BJ (cell line): ENCODE measurements at regions of chr11 and their contacts with region 1.

Region 1: DNA sequence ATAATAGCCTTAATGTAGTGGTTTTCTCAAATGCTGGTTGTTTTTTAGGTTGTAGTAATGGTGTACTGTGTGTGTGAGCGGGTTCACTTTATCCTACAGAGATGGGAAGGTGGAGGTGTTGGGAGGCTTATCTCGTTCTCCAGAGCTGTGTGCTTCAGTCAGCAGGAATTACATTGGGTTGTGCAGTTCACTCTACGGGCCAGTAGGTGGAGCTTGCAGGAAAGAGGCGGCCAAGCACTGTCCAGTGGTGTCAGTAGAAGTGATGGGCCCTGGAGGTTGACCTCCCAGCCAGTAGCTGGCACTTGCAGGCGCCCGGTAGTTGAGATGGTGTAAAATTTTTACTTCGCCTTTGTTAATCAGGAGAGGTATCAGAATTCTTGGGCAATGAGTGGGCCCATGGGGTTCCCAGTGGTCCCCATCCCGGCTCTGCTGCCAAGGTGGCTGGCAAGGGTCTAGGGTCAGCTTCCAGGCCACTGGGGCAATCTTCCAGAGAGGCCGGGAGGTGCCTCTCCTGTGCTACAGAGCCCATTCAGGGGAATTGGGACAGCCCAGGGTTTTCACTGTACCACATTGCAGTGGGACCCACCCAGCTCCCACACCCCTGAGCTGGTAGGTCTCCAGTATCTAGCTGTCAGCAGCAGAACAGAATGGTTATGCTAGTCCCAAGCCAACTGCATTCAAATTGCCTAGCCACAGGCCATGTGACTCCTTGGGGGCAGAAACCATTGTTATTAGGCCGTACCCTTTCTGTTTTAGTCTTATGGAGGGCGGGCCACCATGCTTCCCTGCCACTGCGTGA is 43.9 kb downstream of the BIRC2 start:
- DNase-seq: no peak
- H3K4me3 ChIP-seq: no peak overlapping the region
- H3K27me3 ChIP-seq: no peaks in the 10 kb centered on the region
- CTCF ChIP-seq: peak; percentile 86

Region 2: GRCh38 chr11:102223859-102224258 is 167.0 kb before region 1 on chr11:
- CTCF ChIA-PET with region 1: no interaction called
- POLR2A ChIA-PET with region 1: no interaction called
- DNase-seq: no peak
- H3K4me3 ChIP-seq: no peak overlapping the region
- H3K27me3 ChIP-seq: no peaks in the 10 kb centered on the region
- CTCF ChIP-seq: no peak

Region 3: DNA sequence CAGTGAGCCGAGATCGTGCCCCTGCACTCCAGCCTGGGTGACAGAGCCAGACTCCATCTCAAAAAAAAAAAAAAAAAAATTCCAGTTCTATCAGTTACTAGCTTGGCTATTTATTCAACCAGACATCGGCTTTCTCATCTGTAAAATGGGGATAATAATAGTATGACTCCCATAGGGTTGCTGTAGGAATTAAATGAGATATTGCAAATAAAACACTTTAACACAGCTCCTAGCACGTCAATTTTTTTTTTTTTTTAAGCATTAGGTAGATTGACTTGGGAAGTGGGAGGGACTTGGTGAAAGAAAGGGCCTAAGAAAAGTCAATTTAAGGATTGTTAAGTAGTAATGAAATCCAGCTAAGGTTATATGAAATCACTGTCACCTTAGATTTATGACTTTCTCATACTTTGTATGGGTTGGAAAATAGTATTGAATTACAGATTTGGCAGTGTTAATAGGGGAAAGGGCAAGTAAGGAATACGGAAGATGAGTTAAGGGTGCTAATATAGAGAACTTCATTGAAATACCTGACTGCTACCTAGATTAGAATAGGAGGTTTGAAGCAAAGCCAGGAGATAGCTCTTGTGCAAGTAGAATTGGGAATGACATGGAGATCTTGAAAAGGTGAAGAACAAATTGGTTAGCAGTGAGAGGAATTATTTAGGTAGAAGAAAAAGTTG is 15.0 kb before region 1 on chr11:
- CTCF ChIA-PET with region 1: interaction called, 28 read pairs
- POLR2A ChIA-PET with region 1: no interaction called
- DNase-seq: no peak
- H3K4me3 ChIP-seq: no peak overlapping the region
- H3K27me3 ChIP-seq: no peaks in the 10 kb centered on the region
- CTCF ChIP-seq: no peak

Region 4: GRCh38 chr11:102447193-102447592 is 56.3 kb after region 1 on chr11:
- CTCF ChIA-PET with region 1: interaction called, 11 read pairs
- POLR2A ChIA-PET with region 1: interaction called, 4 read pairs
- DNase-seq: no peak
- H3K4me3 ChIP-seq: no peak overlapping the region
- H3K27me3 ChIP-seq: no peaks in the 10 kb centered on the region
- CTCF ChIP-seq: no peak